Caco-2 (cell line): ENCODE measurements at regions of chr1 and their contacts with region 1.

Region 1: DNA sequence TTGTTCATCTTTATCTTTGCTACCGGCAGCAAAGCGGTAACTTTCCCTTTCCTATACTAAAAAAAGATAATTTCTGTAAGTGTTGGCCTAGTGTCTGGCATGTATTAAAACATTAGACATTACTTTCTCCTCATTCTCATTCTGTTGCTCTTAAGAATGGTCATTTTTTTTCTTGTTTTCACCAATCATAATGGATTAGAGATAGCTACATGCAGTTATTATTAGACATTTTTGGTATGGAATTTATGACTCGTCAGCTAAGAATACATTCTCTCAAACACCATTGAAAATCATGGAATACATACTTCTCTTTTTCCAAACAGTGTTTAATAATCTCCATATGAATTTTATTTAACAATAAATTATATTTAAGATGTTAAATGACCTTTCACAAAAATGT is 1154.6 kb downstream of the BRINP3 start:
- DNase-seq: no peak
- H3K4me3 ChIP-seq: no peak overlapping the region
- H3K4me3 Mint-ChIP-seq: no peak overlapping the region
- H3K27ac Mint-ChIP-seq: no peak overlapping the region
- H3K4me1 ChIP-seq: no peaks in the 10 kb centered on the region
- H3K4me1 Mint-ChIP-seq: no peaks in the 10 kb centered on the region
- H3K27me3 ChIP-seq: no peaks in the 10 kb centered on the region
- H3K27me3 Mint-ChIP-seq: no peaks in the 10 kb centered on the region
- CTCF ChIP-seq: no peak

Region 2: GRCh38 chr1:189103956-189104355 is 219.1 kb before region 1 on chr1:
- CTCF ChIA-PET with region 1: no interaction called
- POLR2A ChIA-PET with region 1: no interaction called
- intact Hi-C with region 1: loop called (anchors 5 kb)
- DNase-seq: no peak
- H3K4me3 ChIP-seq: no peak overlapping the region
- H3K4me3 Mint-ChIP-seq: no peak overlapping the region
- H3K27ac Mint-ChIP-seq: no peak overlapping the region
- H3K4me1 ChIP-seq: no peaks in the 10 kb centered on the region
- H3K4me1 Mint-ChIP-seq: no peaks in the 10 kb centered on the region
- H3K27me3 ChIP-seq: no peaks in the 10 kb centered on the region
- H3K27me3 Mint-ChIP-seq: no peaks in the 10 kb centered on the region
- CTCF ChIP-seq: no peak

Region 3: DNA sequence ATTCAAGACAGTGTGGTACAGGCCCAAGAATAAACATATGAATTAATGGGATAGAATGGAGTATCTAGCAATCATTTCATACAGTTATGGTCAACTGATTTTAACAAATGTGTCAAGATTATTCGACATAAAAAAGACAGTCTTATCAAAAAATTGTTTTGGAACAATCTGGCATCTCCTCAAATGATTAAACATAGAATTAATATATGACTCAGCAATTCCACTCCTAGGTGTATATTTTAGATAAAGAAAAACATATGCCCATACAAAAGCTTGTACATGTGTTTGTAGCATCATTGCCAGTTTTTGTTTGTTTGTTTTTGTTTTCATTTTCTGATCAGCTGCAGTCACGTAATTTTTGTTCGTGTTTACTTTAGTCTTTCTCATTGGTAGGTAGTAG is 33.7 kb before region 1 on chr1:
- CTCF ChIA-PET with region 1: no interaction called
- POLR2A ChIA-PET with region 1: no interaction called
- intact Hi-C with region 1: no loop called
- DNase-seq: no peak
- H3K4me3 ChIP-seq: no peak overlapping the region
- H3K4me3 Mint-ChIP-seq: no peak overlapping the region
- H3K27ac Mint-ChIP-seq: no peak overlapping the region
- H3K4me1 ChIP-seq: no peaks in the 10 kb centered on the region
- H3K4me1 Mint-ChIP-seq: no peaks in the 10 kb centered on the region
- H3K27me3 ChIP-seq: no peaks in the 10 kb centered on the region
- H3K27me3 Mint-ChIP-seq: no peaks in the 10 kb centered on the region
- CTCF ChIP-seq: no peak